IMR-90 (cell line): ENCODE measurements at regions of chr19 and their contacts with region 1.

Region 1: GRCh38 chr19:46392243-46392801 is 21.0 kb downstream of the CCDC8 start:
- DNase-seq: peak; percentile 63
- ATAC-seq: peak; percentile 71
- H3K4me3 ChIP-seq: no peak overlapping the region
- H3K27ac ChIP-seq: peak overlapping the region; percentile 63
- H3K4me1 ChIP-seq: peaks cover 15% of the 10 kb centered on the region
- H3K27me3 ChIP-seq: no peaks in the 10 kb centered on the region
- CTCF ChIP-seq: no peak
- POLR2A ChIP-seq: no peak
- RAD21 ChIP-seq: no peak

Region 2: DNA sequence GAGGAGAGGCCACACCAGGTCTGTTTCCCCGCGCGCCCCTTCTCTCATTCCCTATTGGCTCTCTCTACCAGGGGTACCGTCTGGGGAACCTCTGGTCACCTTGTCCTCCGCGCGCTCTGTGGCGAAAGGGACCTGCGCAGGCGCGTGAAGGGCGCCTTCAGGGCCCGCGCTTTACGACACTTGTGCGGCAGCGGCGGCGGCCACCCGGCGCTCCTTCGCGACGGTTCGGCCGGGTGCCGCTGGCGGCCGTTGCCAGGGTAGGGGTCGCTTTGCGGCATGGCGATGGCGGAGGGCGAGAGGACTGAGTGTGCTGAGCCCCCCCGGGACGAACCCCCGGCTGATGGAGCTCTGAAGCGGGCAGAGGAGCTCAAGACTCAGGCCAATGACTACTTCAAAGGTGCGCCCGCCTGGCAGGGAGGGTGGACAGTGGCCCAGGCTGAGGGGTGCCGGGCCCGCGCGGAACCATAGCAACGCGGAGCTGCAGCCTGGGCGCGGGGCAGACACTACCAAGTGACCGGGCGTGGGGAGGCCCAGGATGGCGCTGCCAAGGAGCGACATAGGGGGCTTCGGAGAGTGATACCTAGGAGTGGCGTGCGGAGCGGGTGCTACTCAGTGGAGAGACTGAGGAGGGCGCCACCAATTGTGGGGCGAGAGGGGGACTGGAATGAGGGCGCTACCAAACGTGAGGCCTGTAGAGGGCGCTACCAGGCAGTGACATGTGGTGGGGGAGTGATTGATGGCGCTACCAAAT is 45.3 kb before region 1 on chr19 and contains the start of gene PPP5C:
- CTCF ChIA-PET with region 1: no interaction called
- POLR2A ChIA-PET with region 1: no interaction called
- dilution Hi-C with region 1: no loop called
- in situ Hi-C with region 1: no loop called
- intact Hi-C with region 1: loop called (anchors 2 kb)
- DNase-seq: peak; percentile 90
- ATAC-seq: peak; percentile 92
- H3K4me3 ChIP-seq: peak within 1 kb of the TSS; percentile 90
- H3K27ac ChIP-seq: peak within 1 kb of the TSS; percentile 95
- H3K4me1 ChIP-seq: peaks cover 15% of the 10 kb centered on the region
- H3K27me3 ChIP-seq: peaks cover 4% of the 10 kb centered on the region; the same call in 1 of the 2 replicates
- CTCF ChIP-seq: peak; percentile 99
- POLR2A ChIP-seq: no peak
- RAD21 ChIP-seq: peak; percentile 48
- total RNA-seq, gene PPP5C: 68.9 and 80.5 TPM in 2 replicates

Region 3: GRCh38 chr19:46499692-46500091 is 107.4 kb after region 1 on chr19:
- CTCF ChIA-PET with region 1: no interaction called
- POLR2A ChIA-PET with region 1: no interaction called
- dilution Hi-C with region 1: no loop called
- in situ Hi-C with region 1: no loop called
- intact Hi-C with region 1: no loop called
- DNase-seq: no peak
- ATAC-seq: no peak
- H3K4me3 ChIP-seq: no peak overlapping the region
- H3K27ac ChIP-seq: no peak overlapping the region
- H3K4me1 ChIP-seq: no peaks in the 10 kb centered on the region
- H3K27me3 ChIP-seq: peaks cover 18% of the 10 kb centered on the region
- CTCF ChIP-seq: no peak
- POLR2A ChIP-seq: no peak
- RAD21 ChIP-seq: no peak

Region 4: DNA sequence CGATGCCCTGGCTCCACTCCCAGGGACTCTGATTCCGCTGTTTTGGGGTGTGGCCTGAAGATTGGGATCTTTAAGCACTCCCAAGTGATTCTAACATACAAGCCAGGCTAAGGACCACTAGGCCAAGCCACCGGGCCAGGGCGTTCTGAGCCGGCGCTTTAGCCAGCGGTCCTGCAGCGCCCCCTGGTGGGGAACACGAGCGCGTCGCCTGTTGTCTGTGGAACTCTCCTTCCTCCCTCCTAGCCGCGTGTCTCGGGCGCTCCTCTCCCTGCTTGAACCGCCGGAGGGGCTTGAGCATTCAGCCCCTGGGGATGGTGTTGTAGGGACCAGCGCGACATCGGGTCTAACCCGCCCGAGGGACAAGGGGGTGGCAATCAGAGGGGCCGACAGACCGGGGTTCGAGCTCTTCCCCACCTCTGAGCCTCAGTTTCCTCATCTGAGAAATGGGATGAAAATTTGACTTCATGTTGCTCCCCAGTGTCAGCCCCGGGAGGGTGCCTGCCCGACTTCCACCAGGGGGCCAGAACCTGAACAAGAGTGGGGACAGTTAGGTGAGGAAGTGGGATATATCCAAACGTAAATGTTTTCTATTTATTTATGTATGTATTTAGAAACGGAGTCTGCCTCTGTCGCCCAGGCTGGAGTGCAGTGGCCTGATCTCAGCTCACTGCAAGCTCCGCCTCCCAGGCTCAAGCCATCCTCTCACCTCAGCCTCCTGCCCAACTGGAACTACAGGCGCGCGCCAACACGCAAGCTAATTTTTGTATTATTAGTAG is 121.3 kb after region 1 on chr19:
- CTCF ChIA-PET with region 1: interaction called, 4 read pairs
- POLR2A ChIA-PET with region 1: no interaction called
- dilution Hi-C with region 1: no loop called
- in situ Hi-C with region 1: no loop called
- intact Hi-C with region 1: loop called (anchors 1 kb)
- DNase-seq: peak; percentile 51
- ATAC-seq: peak; percentile 91
- H3K4me3 ChIP-seq: no peak overlapping the region
- H3K27ac ChIP-seq: no peak overlapping the region
- H3K4me1 ChIP-seq: no peaks in the 10 kb centered on the region
- H3K27me3 ChIP-seq: peaks cover 10% of the 10 kb centered on the region
- CTCF ChIP-seq: peak; percentile 84
- POLR2A ChIP-seq: no peak
- RAD21 ChIP-seq: peak; percentile 86